ENCODE measurements at regions of chr1 and their contacts with region 1.

Region 1: GRCh38 chr1:25997828-25998761 is at the start of gene PAFAH2:
- DNase-seq: peak; percentile 99
- H3K4me3 Mint-ChIP-seq: peak within 1 kb of the TSS; percentile 94
- H3K27ac Mint-ChIP-seq: peak within 1 kb of the TSS; percentile 94
- H3K4me1 Mint-ChIP-seq: peaks cover 7% of the 10 kb centered on the region
- H3K27me3 Mint-ChIP-seq: no peaks in the 10 kb centered on the region
- CTCF ChIP-seq: peak; percentile 94
- total RNA-seq, gene PAFAH2: 12.8 and 22.3 TPM in 2 replicates

Region 2: DNA sequence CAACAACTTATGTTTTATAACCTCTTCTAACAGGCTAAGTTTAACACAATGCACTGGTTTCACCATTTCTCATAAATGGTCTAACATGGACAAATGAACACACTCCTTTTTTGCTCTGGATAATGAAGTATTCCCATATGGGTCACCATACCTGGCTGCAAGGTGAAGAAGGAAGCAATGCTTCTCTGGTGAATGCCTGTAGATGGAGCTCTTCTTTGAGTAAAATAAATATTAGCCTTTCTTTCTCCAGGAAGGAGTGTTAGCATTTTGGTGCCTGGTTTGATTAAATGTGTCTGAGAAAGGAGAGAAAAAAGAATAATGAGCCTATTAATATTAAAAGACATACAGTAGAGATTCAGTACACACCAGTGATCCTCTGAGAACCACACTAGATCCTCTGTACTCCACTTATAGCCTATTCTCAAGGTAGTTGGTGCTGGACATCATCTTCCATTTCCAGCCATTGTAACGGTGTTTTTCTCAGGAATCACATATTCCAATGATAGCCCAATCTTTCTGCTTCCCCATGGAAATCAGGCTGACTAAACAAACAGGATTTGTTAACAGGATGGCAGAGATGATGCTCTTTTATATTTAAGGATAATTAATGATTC is 160.7 kb before region 1 on chr1:
- CTCF ChIA-PET with region 1: interaction called, 9 read pairs
- POLR2A ChIA-PET with region 1: interaction called, 11 read pairs
- intact Hi-C with region 1: loop called (anchors 1 kb)
- DNase-seq: peak; percentile 44
- H3K4me3 Mint-ChIP-seq: no peak overlapping the region
- H3K27ac Mint-ChIP-seq: no peak overlapping the region
- H3K4me1 Mint-ChIP-seq: peaks cover 12% of the 10 kb centered on the region
- H3K27me3 Mint-ChIP-seq: no peaks in the 10 kb centered on the region
- CTCF ChIP-seq: peak; percentile 45

Region 3: GRCh38 chr1:25890239-25891034 is 107.7 kb before region 1 on chr1:
- CTCF ChIA-PET with region 1: interaction called, 106 read pairs
- POLR2A ChIA-PET with region 1: interaction called, 38 read pairs
- intact Hi-C with region 1: loop called (anchors 1 kb)
- DNase-seq: peak; percentile 92
- H3K4me3 Mint-ChIP-seq: no peak overlapping the region
- H3K27ac Mint-ChIP-seq: peak overlapping the region; percentile 85
- H3K4me1 Mint-ChIP-seq: peaks cover 17% of the 10 kb centered on the region
- H3K27me3 Mint-ChIP-seq: no peaks in the 10 kb centered on the region
- CTCF ChIP-seq: no peak

Region 4: GRCh38 chr1:25904943-25905679 is 93.0 kb before region 1 on chr1:
- CTCF ChIA-PET with region 1: interaction called, 24 read pairs
- POLR2A ChIA-PET with region 1: interaction called, 27 read pairs
- intact Hi-C with region 1: loop called (anchors 2 kb)
- DNase-seq: peak; percentile 91
- H3K4me3 Mint-ChIP-seq: peak overlapping the region; percentile 91
- H3K27ac Mint-ChIP-seq: peak overlapping the region; percentile 93
- H3K4me1 Mint-ChIP-seq: peaks cover 6% of the 10 kb centered on the region
- H3K27me3 Mint-ChIP-seq: no peaks in the 10 kb centered on the region
- CTCF ChIP-seq: no peak

Region 5: DNA sequence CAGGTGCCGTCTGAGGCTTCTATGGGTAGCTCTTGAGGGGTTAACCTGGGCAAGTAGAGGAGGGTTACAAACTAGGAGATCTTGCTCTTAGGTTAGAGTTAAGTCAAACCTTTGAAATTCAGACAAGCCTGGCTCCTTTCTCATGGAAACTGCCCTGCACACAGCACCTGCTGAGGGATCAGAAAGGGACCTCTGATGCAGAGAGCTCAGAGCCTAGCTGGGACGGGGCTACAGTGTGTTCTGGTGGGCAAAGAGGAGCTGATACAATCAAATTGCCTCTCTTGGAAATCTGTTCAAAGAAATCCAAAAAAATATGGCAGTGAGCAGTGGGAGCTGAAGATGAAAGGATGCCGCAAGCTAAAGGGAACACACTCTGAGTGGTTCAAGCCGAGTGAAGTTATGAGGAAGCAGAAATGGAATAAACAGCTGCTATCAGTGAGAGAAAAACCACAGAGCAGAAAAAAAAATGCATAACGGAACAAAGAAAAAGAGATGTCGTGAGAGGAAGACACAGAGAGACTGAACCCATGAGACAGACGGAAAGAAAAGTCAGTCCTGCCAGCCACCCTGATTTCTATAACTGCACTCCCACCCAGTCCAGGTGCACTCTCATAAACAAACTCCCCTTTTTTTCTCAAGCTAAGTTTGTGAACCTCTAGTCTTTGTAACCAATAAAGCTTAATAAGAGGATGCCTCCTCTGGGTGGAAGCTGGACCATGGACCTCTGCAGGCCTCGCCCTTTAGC is 26.9 kb before region 1 on chr1:
- CTCF ChIA-PET with region 1: no interaction called
- POLR2A ChIA-PET with region 1: no interaction called
- intact Hi-C with region 1: no loop called
- DNase-seq: no peak
- H3K4me3 Mint-ChIP-seq: no peak overlapping the region
- H3K27ac Mint-ChIP-seq: no peak overlapping the region
- H3K4me1 Mint-ChIP-seq: no peaks in the 10 kb centered on the region
- H3K27me3 Mint-ChIP-seq: no peaks in the 10 kb centered on the region
- CTCF ChIP-seq: no peak